Right ventricle myocardium inferior (tissue), 1 donor: ENCODE measurements at regions of chr14 and their contacts with region 1.

Region 1: GRCh38 chr14:34714320-34715126 is at the start of gene CFL2:
- DNase-seq: peak; percentile 91
- ATAC-seq: peak; percentile 99
- total RNA-seq, gene CFL2: 547 TPM

Region 2: DNA sequence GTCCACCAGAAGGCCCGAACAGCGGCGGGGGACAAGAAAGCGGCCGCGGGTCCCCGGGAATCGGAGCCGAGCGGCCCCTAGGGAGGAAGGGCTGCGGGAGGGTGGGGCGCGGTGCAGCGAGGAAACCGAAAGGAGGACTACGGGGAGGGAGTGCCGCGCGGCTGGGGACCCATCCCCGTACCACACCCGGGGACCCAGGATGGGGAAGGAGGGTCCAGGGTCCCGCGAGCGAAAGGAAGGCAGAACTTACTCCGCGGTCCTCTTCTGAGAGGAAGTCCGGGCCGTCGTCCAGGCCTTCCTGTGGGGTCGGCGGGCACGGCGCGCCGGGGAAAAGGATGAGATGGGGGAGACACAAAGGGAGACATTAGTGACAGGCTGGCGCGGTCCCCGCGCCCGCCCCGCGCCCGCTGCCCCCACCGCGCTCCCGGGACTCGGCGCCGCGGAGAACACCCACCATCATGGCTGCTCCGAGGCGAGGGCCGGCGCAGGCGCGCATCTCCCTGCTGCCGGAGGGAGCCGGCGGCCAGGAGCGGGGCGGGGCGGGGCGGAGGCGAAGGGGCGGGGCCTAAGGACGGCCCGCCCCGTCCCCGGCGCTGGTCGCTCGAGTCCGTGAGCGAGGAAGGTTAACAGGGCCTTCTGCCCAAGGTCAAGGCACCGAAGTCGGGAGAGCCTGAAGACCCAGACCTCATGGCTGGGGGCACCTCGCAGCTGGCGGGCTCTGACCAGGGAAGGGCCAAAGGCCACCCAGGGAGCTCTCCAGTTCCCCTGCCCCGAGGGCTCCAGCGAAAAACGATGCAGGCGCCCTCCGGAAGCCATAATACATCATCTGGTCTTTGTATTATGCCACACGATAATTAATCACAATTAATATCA is 84.6 kb before region 1 on chr14 and contains the start of gene SNX6:
- intact Hi-C with region 1: loop called (anchors 2 kb)
- DNase-seq: peak; percentile 95
- ATAC-seq: peak; percentile 98
- total RNA-seq, gene SNX6: 66.4 TPM

Region 3: DNA sequence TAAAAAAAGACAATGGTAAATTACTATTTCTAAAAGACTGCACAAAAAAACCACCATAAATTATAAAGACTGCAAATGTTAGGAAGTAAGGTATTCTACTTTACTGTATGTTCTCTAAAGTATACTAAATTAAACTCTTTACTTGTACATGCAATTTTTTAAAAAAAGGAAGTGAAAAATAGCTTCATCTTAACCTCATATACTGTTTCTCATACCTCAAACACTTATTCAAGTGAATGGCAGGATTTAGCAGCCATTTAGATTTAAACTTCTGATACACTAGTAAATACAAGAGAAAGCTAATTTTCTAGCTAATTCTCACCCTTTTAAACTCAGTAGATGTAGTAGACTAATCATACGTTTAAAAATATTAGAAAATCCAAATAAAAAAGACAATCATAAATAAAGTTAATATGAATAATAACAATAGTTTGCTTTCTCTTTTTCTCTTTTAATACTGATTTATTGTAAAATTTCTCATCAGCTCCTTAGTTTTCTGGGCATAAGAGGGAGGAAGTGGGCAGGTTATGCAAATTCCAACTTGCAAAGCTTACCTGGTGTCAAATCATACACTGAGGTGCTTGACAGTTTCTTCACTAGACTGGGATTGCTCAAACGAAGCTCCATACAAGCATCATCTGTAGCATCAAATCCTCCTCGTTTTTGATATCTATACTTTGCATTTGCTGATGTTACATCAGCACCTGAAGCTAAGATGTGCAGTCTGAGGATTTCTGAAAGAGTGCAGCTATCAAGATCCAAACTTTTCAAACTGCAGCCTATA is 70.9 kb after region 1 on chr14:
- intact Hi-C with region 1: no loop called
- DNase-seq: no peak
- ATAC-seq: no peak

Region 4: DNA sequence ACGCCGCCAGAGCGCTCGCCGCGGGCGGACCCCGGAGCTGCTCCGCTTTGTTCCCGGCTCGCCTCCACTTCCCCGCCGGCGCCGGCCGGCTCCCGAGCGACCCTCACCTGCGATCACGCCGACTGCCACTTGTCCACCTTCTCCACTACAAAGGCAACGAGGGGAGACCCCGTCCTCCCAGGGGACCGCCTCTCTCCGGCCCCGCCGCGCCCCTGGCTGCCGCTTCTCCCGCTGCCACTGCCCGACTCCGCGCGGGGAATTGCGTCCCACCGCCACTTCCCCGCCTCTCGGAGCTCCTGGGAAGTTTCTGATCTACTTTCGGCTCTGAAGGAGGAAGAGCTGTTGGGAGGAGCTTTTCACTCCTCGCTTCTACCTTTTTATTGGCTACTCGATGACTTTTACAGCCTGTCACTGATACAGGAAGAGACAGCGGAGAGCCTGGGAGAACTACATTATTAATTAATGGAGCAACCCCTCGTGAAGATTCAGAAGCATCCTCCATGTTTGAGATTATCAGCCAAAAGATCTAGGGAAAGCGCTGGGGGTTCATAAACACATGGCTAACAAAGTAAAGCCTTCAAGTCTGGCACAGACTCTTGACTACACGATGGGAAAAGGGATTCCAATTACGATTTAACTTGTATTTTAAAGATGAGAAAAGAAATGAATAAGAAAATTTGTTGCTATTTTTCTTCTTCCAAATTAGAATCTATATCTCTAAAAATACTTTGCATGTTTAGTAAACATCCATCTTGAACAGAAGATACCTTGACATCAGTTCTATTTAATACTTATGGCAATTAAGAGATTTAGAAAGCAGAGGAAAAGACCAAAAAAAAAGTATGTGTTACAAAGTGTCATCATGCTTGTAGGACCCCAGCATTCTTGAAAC is 160.8 kb after region 1 on chr14 and contains the start of gene BAZ1A:
- intact Hi-C with region 1: loop called (anchors 5 kb)
- DNase-seq: peak; percentile 80
- ATAC-seq: peak; percentile 74
- total RNA-seq, gene BAZ1A: 5.6 TPM